ENCODE measurements at regions of chr17 and their contacts with region 1.

Region 1: DNA sequence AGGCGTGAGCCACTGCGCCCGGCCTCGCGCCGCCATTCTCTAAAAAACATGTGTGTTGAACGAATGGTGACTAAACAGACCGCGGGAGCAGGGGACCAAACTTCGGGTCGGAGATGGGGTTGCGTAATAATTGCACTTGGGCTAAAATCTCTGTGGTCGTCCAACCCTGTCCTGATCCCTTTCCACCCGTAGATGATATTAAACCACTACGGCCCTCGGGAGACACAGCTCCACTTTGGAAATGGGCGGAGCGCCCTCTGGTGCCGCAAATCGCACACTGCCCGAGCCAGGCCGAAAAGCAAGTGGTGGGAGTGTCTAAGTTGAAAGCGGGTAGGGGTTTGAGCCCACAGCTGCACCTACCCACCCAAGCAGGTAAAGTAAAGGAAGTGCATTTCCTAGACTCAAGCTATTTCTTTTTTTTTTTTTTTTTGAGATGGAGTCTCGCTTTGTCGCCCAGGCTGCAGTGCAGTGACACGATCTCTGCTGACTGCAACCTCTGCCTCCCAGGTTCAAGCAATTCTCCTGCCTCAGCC is 17.0 kb downstream of the CAVIN1 start:
- H3K4me3 ChIP-seq: no peak overlapping the region
- H3K27ac ChIP-seq: no peak overlapping the region
- H3K4me1 ChIP-seq: 0 out of 2 replicates have a peak, but pooled peaks cover 3% of the 10 kb centered on the region
- CTCF ChIP-seq: peak; percentile 88

Region 2: GRCh38 chr17:42334677-42335076 is 71.4 kb before region 1 on chr17:
- CTCF ChIA-PET with region 1: interaction called, 11 read pairs
- POLR2A ChIA-PET with region 1: no interaction called
- H3K4me3 ChIP-seq: no peak overlapping the region
- H3K27ac ChIP-seq: no peak overlapping the region
- H3K4me1 ChIP-seq: no peaks in the 10 kb centered on the region
- CTCF ChIP-seq: no peak

Region 3: GRCh38 chr17:42388381-42389134 is 17.5 kb before region 1 on chr17 and contains the start of gene STAT3:
- CTCF ChIA-PET with region 1: interaction called, 23 read pairs
- POLR2A ChIA-PET with region 1: interaction called, 10 read pairs
- H3K4me3 ChIP-seq: peak within 1 kb of the TSS; percentile 95
- H3K27ac ChIP-seq: peak within 1 kb of the TSS; percentile 73
- H3K4me1 ChIP-seq: peaks cover 8% of the 10 kb centered on the region
- CTCF ChIP-seq: 0 out of 2 replicates have a peak, but pooled peaks have one; percentile 57

Region 4: GRCh38 chr17:42517516-42517915 is 111.5 kb after region 1 on chr17:
- CTCF ChIA-PET with region 1: interaction called, 18 read pairs
- POLR2A ChIA-PET with region 1: interaction called, 3 read pairs
- H3K4me3 ChIP-seq: no peak overlapping the region
- H3K27ac ChIP-seq: no peak overlapping the region
- H3K4me1 ChIP-seq: peaks cover 25% of the 10 kb centered on the region
- CTCF ChIP-seq: peak; percentile 94

Region 5: GRCh38 chr17:42527273-42527703 is 121.3 kb after region 1 on chr17:
- CTCF ChIA-PET with region 1: interaction called, 40 read pairs
- POLR2A ChIA-PET with region 1: interaction called, 3 read pairs
- H3K4me3 ChIP-seq: no peak overlapping the region
- H3K27ac ChIP-seq: no peak overlapping the region
- H3K4me1 ChIP-seq: peaks cover 15% of the 10 kb centered on the region
- CTCF ChIP-seq: peak; percentile 87

Measured in HEK293 (cell line).